Prostate gland (tissue), 2 donors: ENCODE measurements at regions of chr6 and their contacts with region 1.

Region 1: DNA sequence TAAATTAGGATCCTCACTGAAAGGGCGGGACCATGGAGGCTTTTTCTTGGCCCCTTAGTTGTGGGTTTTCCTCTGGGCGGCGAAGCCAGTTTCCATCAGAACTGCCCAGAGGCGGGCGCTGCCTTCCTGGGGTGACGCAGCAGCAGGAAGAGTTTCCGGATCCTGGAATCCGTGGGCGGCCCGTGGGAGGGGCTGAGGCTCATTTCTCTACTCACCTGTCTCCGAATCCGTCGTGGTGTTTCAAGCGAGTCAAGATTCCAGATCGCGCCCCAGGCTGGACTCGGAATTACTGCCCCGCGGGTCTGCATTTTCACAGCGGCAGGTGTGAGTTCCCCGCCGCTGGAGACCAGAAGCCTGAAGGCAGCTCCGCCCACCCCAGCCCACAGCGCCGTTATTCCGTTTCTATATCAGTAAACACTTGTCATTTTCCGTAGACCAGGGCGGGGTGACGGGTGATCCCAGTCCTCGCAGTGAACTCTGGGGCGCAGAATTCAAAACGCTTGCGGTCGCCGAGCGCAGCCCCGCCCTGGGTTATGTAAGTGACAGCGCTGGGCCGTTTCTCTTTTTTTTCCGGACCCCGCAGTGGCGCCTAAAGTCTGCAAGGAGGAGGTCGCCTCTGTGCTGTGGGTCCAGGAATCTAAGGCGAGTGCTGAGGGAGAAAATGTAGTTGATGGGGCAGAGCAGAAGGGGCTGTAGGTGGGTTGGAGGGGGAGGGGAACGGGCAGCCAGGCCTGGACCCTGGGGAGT is 27.2 kb upstream of the POU5F1 start:
- DNase-seq: peak; percentile 90
- H3K4me3 ChIP-seq: peak overlapping the region; percentile 67 to 68
- H3K27ac ChIP-seq: peak overlapping the region; percentile 94 to 95
- H3K4me1 ChIP-seq: no peaks in the 10 kb centered on the region
- H3K27me3 ChIP-seq: no peaks in the 10 kb centered on the region
- CTCF ChIP-seq: peak in 1 of 4 experiments; percentile 27
- POLR2A ChIP-seq: peak; percentile 71

Region 2: DNA sequence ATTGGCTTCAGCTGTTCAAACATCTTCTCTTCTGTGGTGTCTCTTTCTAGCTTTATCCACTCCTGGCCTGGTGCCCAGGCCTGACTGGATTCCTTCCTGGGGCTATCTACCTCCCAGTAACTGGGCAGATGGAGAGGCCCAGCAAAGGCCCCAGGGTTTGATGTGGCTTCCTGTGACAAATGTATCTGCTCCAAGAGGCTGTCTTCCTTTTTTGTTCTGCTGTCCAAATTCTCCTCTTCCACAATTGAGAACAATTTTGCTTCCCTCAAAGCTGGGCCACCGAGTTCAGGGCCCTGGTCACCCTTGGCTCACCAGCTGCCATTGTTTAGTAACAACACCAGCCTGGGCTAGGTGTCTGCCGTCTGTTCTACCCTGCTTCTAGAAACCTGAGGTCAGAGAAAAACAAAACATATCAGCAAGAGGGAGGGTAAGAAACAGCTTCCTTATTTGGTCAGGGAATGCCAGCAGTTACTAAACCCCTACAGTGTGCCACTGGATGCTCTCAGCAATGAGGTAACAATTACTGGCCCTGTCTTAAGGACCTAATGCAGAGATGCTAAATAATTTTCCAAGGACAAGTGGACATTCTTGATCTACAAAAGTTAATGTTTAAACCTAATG is 1520.6 kb before region 1 on chr6:
- intact Hi-C with region 1: no loop called
- DNase-seq: no peak
- H3K4me3 ChIP-seq: no peak overlapping the region
- H3K27ac ChIP-seq: no peak overlapping the region
- H3K4me1 ChIP-seq: no peaks in the 10 kb centered on the region
- H3K27me3 ChIP-seq: no peaks in the 10 kb centered on the region
- CTCF ChIP-seq: no peak
- POLR2A ChIP-seq: no peak

Region 3: DNA sequence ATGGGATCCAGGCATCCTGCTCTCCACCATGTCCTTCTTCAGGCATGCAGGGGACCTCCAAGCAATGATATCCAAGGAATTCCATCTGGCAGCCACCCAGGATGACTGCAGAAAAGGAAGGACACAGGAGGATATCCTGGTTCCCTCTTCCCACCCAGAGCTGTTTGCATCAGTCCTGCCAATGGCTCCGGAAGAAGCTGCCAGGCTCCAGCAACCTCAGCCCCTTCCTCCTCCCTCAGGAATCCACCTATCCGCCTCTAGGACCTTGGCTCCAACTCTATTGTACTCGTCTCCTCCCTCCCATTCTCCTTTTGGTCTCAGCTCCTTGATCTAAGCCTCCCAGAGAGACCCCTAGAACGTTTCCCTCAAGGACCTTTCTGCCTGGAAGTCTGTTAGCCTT is 58.1 kb before region 1 on chr6:
- intact Hi-C with region 1: loop called (anchors 1 kb)
- DNase-seq: no peak
- H3K4me3 ChIP-seq: no peak overlapping the region
- H3K27ac ChIP-seq: no peak overlapping the region
- H3K4me1 ChIP-seq: no peaks in the 10 kb centered on the region
- H3K27me3 ChIP-seq: no peaks in the 10 kb centered on the region
- CTCF ChIP-seq: no peak
- POLR2A ChIP-seq: no peak

Region 4: DNA sequence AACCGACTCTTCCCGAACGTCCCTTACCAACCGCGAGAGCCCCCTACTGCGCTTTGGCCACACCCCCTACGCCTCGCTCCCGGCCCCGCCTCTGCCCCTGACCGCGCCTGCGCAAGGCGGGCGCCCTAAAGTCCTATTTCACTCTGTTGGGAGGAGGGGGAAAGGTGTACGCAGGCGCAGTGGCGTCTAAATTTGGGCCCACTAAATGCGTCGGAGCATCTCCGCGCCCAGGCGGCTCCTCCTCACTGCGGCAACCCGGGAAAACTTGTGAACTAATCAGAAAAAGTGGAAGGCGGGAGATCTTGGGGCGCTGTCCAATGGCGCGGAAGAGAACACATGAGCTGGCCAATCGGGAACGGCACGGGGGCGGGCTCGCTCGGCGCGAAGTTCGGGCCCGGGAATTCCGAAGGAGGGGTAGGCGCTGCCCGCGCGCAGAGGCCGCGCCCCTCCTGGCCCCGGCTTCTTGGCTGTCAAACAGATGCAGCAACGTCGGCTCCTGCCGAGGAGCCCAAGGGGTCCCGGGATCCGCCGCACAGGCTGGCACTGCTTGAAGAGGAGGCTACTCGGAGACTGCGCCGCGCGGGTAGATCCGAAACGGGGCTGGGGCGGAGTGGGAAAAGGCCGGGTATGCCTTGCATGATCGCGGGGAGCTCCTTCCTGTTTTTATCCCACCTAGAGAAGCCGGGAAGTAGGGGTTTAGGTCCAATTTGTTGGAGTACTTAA is 39.4 kb before region 1 on chr6 and contains the start of gene TCF19:
- intact Hi-C with region 1: loop called (anchors 5 kb)
- DNase-seq: peak; percentile 98
- H3K4me3 ChIP-seq: peak within 1 kb of the TSS; percentile 57 to 58
- H3K27ac ChIP-seq: peak within 1 kb of the TSS; percentile 80 to 86
- H3K4me1 ChIP-seq: peaks cover 5% of the 10 kb centered on the region
- H3K27me3 ChIP-seq: no peaks in the 10 kb centered on the region
- CTCF ChIP-seq: no peak
- POLR2A ChIP-seq: peak; percentile 57
- total RNA-seq, gene TCF19: 7.6 to 10.0 TPM

Region 5: GRCh38 chr6:31271641-31272357 is 74.1 kb after region 1 on chr6 and contains the start of gene HLA-C:
- intact Hi-C with region 1: loop called (anchors 2 kb)
- DNase-seq: peak; percentile 96
- H3K4me3 ChIP-seq: peak within 1 kb of the TSS; percentile 68 to 76
- H3K27ac ChIP-seq: peak within 1 kb of the TSS; percentile 92 to 97
- H3K4me1 ChIP-seq: no peaks in the 10 kb centered on the region
- H3K27me3 ChIP-seq: no peaks in the 10 kb centered on the region
- CTCF ChIP-seq: no peak
- POLR2A ChIP-seq: peak; percentile 89
- total RNA-seq, gene HLA-C: 272 to 682 TPM

Region 6: GRCh38 chr6:31308050-31308844 is 110.5 kb after region 1 on chr6:
- intact Hi-C with region 1: no loop called
- DNase-seq: peak; percentile 76
- H3K4me3 ChIP-seq: peak overlapping the region; percentile 31 to 39
- H3K27ac ChIP-seq: peak overlapping the region in 1 of 2 donors; percentile 27
- H3K4me1 ChIP-seq: no peaks in the 10 kb centered on the region
- H3K27me3 ChIP-seq: no peaks in the 10 kb centered on the region
- CTCF ChIP-seq: no peak
- POLR2A ChIP-seq: no peak

Region 7: DNA sequence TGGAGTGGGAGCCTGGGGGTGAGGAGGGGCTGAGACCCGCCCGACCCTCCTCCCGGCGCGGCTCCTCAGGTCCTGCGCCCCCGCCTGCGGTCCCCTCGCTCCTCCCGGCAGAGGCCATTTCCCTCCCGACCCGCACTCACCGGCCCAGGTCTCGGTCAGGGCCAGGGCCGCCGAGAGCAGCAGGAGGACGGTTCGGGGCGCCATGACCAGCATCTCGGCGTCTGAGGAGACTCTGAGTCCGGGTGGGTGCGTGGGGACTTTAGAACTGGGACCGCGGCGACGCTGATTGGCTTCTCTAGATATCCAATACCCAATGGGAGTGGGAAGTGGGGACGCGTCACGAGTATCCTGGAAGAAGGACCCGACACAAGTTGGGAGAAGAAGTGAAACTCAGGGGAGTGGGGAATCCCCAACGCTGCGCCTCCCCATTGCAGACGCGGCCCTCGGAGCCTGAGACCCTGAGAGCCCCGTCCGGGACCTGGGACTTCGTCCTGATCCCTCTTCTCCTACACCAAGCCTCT is 159.3 kb after region 1 on chr6 and contains the start of gene HLA-B:
- intact Hi-C with region 1: loop called (anchors 2 kb)
- DNase-seq: peak; percentile 77
- H3K4me3 ChIP-seq: peak within 1 kb of the TSS; percentile 55 to 58
- H3K27ac ChIP-seq: peak within 1 kb of the TSS; percentile 80 to 89
- H3K4me1 ChIP-seq: no peaks in the 10 kb centered on the region
- H3K27me3 ChIP-seq: no peaks in the 10 kb centered on the region
- CTCF ChIP-seq: no peak
- POLR2A ChIP-seq: no peak
- total RNA-seq, gene HLA-B: 846 to 899 TPM

Region 8: DNA sequence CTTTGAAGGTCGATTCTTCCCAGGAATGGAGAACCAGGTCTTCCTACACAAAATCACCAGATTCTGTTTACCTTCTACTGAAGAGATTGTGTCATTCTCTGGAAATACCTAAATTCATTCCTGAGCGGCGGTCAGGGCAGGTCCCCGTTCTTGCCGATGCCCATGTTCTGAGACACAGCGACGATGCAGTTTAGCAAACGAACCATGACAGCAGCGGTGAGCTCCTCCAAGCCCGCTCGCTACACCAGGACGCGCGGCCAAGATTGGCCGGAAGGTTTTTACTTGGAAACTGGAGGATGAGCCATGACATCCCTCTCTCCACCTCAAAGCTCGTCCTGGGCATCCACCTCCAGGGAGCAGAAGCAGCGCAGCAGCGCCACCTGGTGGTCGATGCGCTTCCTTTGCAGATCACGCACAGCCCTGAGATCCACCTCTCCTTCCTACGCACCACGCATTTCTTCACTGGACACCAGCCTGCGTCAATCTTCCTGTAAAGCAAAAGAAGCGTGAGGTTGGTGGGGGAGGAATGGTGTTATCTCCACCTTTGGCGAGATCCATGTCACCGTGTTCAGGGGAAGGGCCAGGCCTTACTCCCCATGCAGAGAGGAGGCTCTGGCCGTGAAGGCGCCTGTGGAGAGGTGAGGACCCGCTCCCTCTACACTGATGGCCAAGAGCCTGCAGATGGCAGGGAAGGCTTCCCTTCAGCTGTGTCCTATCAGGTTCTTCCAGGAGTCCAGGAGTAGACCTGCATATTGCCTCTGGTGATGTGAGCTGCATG is 169.2 kb after region 1 on chr6:
- intact Hi-C with region 1: loop called (anchors 1 kb)
- DNase-seq: peak; percentile 87
- H3K4me3 ChIP-seq: peak overlapping the region; percentile 6 to 17
- H3K27ac ChIP-seq: peak overlapping the region; percentile 27 to 42
- H3K4me1 ChIP-seq: no peaks in the 10 kb centered on the region
- H3K27me3 ChIP-seq: no peaks in the 10 kb centered on the region
- CTCF ChIP-seq: peak; percentile 80 to 98 (median 96)
- POLR2A ChIP-seq: no peak

Region 9: DNA sequence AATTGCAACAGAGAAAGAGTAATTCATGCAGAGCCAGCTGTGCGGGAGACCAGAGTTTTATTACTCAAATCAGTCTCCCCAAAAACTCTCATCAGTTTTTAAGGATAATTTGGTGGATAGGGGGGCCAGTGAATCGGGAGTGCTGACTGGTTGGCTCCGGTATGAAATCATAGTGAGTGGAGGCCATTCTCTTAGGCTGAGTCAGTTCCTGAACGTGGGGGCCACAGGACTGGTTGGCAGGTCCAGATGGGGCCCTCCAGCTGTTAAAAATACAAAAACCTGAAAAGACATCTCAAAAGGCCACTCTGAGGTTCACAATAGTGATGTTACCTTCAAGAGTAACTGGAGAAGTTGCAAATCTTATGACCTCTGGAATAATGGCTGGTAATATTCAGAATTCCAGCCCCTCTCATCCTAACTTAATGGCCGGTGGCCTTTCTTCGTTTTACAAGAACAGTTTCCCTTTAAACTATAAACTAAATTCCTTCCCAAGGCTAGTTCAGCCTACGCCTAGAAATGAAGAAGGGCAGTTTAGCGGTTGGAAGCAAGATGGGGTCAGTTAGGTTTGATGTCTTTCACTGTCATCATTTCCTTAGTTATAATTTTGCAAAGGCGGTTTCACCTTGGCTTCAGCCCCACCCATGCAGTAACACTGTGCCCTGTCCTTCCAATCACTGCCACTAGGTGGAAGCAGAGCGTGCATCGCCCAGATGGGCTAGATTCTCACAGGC is 198.9 kb after region 1 on chr6:
- intact Hi-C with region 1: no loop called
- DNase-seq: peak; percentile 77
- H3K4me3 ChIP-seq: no peak overlapping the region
- H3K27ac ChIP-seq: peak overlapping the region in 1 of 2 donors; percentile 5
- H3K4me1 ChIP-seq: no peaks in the 10 kb centered on the region
- H3K27me3 ChIP-seq: no peaks in the 10 kb centered on the region
- CTCF ChIP-seq: peak; percentile 55 to 87 (median 80)
- POLR2A ChIP-seq: no peak